ENCODE measurements at regions of chrX and their contacts with region 1.

Region 1: DNA sequence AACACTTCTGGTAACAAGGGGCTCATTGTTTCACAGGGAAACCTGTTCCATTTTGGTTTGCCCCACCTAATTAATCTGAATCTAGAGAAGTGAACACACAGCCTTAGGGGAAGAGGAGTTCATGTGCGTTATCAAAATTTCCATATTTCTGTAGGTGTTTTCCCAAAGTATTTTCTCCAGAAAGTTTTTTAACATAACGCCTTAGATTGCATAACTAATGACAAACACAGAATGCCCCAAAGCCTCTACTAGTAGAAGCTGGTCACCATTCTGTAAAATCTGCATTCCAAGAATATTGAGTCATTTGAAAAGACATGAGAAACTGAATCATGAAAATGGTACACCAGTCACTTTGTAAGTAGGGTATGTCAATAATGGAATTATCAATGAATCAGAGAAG is 41.1 kb downstream of the IL13RA2 start:
- DNase-seq: peak; percentile 83
- ATAC-seq: peak; percentile 46
- H3K4me3 ChIP-seq: no peak overlapping the region
- H3K27ac ChIP-seq: peak overlapping the region; percentile 87
- H3K4me1 ChIP-seq: peaks cover 12% of the 10 kb centered on the region
- H3K27me3 ChIP-seq: no peaks in the 10 kb centered on the region
- CTCF ChIP-seq: no peak

Region 2: DNA sequence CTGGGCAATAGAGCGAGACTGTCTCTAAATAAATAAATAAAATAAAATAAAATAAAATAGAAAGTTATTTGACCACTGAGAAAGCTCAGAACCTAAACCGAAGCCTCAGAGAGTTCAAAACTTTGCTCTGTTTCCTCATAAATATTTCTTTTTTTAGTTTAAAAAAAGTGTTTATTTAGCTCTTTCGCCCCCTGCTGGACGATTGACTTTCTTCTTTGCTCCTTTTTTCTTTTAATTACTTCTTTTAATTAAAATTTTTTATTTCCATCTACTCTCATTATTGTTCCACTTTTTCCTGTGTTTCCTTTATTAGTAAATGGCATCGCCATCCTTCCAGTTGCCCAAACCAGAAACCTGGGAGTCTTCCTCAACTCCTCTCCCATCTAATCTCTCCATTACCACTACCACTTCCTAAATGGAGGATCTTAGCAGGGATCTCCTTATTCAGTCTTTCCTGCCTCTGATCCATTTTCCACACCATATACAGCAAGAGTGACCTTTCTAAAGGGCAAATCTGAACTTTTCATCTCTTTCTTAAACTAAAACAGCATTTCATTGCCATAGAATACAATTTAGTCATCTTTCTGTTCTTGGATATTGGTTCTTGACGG is 41.9 kb after region 1 on chrX:
- CTCF ChIA-PET with region 1: no interaction called
- POLR2A ChIA-PET with region 1: no interaction called
- intact Hi-C with region 1: loop called (anchors 5 kb)
- DNase-seq: no peak
- ATAC-seq: no peak
- H3K4me3 ChIP-seq: no peak overlapping the region
- H3K27ac ChIP-seq: peak overlapping the region; percentile 93
- H3K4me1 ChIP-seq: peaks cover 44% of the 10 kb centered on the region
- H3K27me3 ChIP-seq: no peaks in the 10 kb centered on the region
- CTCF ChIP-seq: no peak; the same call in 1 of the 2 replicates

Region 3: GRCh38 chrX:115499112-115499805 is 523.0 kb after region 1 on chrX:
- CTCF ChIA-PET with region 1: no interaction called
- POLR2A ChIA-PET with region 1: no interaction called
- intact Hi-C with region 1: no loop called
- DNase-seq: no peak
- ATAC-seq: no peak
- H3K4me3 ChIP-seq: no peak overlapping the region
- H3K27ac ChIP-seq: no peak overlapping the region
- H3K4me1 ChIP-seq: peaks cover 4% of the 10 kb centered on the region
- H3K27me3 ChIP-seq: no peaks in the 10 kb centered on the region
- CTCF ChIP-seq: no peak

Measured in PC-3 (cell line).